ENCODE measurements at regions of chr16 and their contacts with region 1.

Region 1: DNA sequence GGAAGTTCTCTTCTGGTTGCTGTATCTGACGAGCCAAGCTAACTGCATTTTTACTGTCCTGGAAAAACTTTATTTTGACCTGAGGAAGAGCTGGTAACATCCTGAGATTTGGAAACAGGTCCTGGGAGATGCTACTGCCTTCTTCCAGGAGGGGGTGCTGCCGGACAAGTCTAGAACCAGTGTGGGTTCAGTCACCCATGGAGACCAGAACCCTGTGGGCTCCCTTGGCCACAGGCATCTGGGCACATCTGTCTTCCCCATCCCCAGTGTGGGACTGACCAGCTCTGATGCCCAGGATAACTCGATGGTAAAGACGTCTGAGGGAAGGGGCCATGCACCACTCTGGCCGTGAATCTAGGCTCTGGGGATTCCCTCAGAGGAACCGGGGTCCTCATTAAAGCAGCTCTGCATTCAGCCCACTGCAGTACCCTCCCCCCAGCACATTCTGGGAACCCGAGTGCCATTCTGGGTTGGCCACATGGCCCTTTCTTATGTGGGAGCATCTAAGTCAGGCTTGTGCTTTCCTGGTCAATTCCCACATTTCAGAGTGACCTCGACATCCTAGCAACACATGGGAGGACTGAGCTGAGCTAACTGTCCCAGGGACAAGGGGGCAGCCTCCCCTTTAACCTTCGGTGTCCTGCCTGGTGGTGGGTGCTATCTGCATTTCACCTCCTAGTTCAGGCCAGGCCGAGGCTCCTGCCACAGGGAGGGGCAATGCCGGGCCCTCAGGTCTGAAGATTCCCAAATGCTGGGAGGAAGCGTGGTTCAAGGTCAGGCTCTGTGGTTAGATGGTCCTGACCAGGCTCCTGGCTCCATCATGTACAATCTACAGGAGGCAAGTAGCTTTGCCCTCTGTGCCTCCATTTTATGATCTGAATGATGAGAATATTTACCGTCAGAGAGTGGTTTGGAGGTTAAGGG is 6.4 kb downstream of the C16orf86 start:
- DNase-seq: peak in 5 of 6 donors; percentile 49 to 69 (median 64)
- ATAC-seq: peak in 3 of 4 donors; percentile 47 to 67 (median 60)
- H3K4me3 ChIP-seq: no peak overlapping the region
- H3K27ac ChIP-seq: peak overlapping the region; percentile 25 to 88 (median 60)
- H3K4me1 ChIP-seq: peaks cover 5 to 16% (median 9%) of the 10 kb centered on the region in 3 donors
- H3K27me3 ChIP-seq: no peaks in the 10 kb centered on the region
- CTCF ChIP-seq: peak; percentile 33 to 70 (median 58)

Region 2: DNA sequence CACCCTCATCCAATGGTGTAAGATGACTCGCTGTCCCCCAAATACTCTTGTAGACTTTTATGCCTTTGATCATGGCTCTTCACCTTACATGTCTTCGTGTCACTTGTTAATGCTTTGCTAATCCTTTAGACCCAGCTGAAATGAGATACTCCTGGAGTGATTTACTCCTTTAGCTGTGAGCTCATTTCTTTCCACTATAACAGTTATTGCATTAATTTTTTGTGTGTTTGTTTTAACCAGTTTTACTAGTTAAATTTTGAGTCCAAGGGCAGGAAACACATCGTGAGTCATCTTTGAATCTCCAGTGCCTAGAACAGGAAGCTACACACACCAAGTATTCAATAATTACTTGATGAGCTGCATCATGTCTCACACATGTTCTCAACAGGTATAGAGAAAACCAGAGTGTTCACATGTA is 117.2 kb before region 1 on chr16:
- intact Hi-C with region 1: no loop called
- DNase-seq: no peak
- ATAC-seq: peak in 1 of 4 donors; percentile 46
- H3K4me3 ChIP-seq: no peak overlapping the region
- H3K27ac ChIP-seq: no peak overlapping the region
- H3K4me1 ChIP-seq: peaks cover 6 to 17% (median 10%) of the 10 kb centered on the region in 3 donors
- H3K27me3 ChIP-seq: no peaks in the 10 kb centered on the region
- CTCF ChIP-seq: no peak

Region 3: DNA sequence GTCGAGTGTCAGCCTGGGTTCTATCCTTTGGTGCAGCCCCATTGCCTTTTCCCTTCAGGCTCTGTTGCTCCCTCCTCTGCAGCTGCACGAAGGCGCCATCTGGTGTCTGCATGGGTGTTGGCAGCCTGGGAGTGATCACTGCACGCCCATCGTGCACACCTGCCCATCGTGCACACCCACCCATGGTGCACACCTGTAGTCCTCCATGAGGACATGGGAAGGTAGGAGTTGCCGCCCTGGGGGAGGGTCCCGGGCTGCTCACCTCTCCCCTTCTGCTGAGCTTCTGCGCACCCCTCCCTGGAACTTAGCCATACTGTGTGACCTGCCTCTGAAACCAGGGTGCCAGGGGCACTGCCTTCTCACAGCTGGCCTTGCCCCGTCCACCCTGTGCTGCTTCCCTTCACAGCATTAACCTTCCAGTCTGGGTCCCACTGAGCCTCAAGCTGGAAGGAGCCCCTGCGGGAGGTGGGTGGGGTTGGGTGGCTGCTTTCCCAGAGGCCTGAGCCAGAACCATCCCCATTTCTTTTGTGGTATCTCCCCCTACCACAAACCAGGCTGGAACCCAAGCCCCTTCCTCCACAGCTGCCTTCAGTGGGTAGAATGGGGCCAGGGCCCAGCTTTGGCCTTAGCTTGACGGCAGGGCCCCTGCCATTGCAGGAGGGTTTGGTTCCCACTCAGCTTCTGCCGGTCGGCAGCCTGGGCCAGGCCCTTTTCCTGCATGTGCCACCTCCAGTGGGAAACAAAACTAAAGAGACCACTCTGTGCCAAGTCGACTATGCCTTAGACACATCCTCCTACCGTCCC is 255.8 kb after region 1 on chr16:
- intact Hi-C with region 1: loop called in 1 of 3 experiments (anchors 10 kb)
- DNase-seq: peak; percentile 80 to 92 (median 84)
- ATAC-seq: peak; percentile 23 to 68 (median 38)
- H3K4me3 ChIP-seq: peak overlapping the region in 3 of 4 donors; percentile 43
- H3K27ac ChIP-seq: peak overlapping the region in 3 of 4 donors; percentile 48 to 81 (median 80)
- H3K4me1 ChIP-seq: peaks cover 0 to 9% (median 8%) of the 10 kb centered on the region in 3 donors
- H3K27me3 ChIP-seq: no peaks in the 10 kb centered on the region
- CTCF ChIP-seq: peak; percentile 47 to 75 (median 64)

Region 4: DNA sequence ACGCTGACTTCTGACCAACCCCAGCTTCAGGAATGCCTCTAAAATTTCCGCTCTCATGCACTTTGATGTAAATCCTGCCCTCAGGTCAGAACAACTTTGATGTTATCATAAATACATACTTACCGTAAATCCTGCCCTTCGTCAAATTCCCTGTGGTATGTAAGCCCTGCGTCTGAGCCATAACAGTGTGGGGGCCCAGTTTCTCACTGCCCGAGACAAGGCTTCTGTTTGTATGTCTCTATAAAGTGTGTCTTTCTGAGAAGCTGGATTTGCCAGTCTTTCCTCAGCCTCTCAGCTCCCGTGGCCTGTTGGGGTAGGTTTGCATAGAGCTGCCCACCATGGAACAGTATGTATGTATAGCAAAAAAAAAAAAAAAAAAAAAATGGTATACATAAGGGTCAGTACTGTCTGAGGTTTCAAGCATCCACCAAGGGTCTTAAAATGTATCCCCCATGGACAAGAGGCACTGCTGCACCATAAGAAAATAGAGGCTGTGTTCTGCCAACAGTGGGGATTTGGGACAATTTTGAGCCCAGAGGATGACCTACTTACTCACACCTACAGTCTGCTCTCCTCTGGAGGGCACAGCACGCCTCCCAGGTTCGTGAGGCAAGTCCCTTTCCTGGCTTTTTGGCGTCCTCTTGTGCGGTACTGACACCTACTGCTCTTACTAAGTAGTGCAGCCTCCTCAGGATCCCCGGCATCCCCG is 655.3 kb after region 1 on chr16:
- intact Hi-C with region 1: no loop called
- DNase-seq: peak; percentile 67 to 87 (median 76)
- ATAC-seq: peak; percentile 97 to 99 (median 98)
- H3K4me3 ChIP-seq: no peak overlapping the region
- H3K27ac ChIP-seq: no peak overlapping the region
- H3K4me1 ChIP-seq: no peaks in the 10 kb centered on the region
- H3K27me3 ChIP-seq: no peaks in the 10 kb centered on the region
- CTCF ChIP-seq: peak; percentile 74 to 89 (median 84)